CD8-positive, alpha-beta T cell (primary cell): ENCODE measurements at regions of chr7 and their contacts with region 1.

Region 1: GRCh38 chr7:3338161-3338560 is 37.1 kb downstream of the SDK1 start:
- DNase-seq: no peak
- ATAC-seq: no peak
- H3K4me3 ChIP-seq: no peak overlapping the region
- H3K4me3 Mint-ChIP-seq: no peak overlapping the region
- H3K27ac ChIP-seq: no peak overlapping the region
- H3K27ac Mint-ChIP-seq: no peak overlapping the region
- H3K4me1 ChIP-seq: no peaks in the 10 kb centered on the region
- H3K4me1 Mint-ChIP-seq: no peaks in the 10 kb centered on the region
- H3K27me3 ChIP-seq: peaks cover 0 to 3% of the 10 kb centered on the region in 2 experiments
- H3K27me3 Mint-ChIP-seq: peaks cover 30% of the 10 kb centered on the region
- CTCF ChIP-seq: no peak

Region 2: DNA sequence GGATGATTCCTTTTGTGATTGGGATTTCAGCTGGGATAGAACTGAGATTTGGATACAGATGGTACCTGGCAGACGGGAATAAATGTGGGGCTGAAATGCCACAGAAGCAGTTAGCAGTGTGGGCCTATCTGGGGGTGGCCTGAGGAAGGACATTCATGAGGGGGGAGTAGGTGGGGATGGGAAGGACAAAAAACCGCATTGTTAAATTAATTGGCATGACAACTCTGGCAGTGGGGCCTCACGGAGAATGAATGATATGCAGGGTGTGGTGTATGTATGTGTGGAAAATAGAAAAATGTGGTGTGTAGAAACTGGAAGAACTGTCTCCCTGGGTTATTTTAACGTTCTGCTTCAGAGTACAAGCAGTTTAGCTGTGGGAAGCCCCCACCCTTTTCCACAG is 19.3 kb before region 1 on chr7:
- CTCF ChIA-PET with region 1: no interaction called
- POLR2A ChIA-PET with region 1: no interaction called
- intact Hi-C with region 1: loop called in 1 of 2 experiments (anchors 2 kb)
- DNase-seq: no peak
- ATAC-seq: no peak
- H3K4me3 ChIP-seq: no peak overlapping the region
- H3K4me3 Mint-ChIP-seq: no peak overlapping the region
- H3K27ac ChIP-seq: no peak overlapping the region
- H3K27ac Mint-ChIP-seq: no peak overlapping the region
- H3K4me1 ChIP-seq: no peaks in the 10 kb centered on the region
- H3K4me1 Mint-ChIP-seq: no peaks in the 10 kb centered on the region
- H3K27me3 ChIP-seq: no peaks in the 10 kb centered on the region
- H3K27me3 Mint-ChIP-seq: peaks cover 3% of the 10 kb centered on the region
- CTCF ChIP-seq: no peak

Region 3: GRCh38 chr7:4123823-4124222 is 785.7 kb after region 1 on chr7:
- CTCF ChIA-PET with region 1: no interaction called
- POLR2A ChIA-PET with region 1: no interaction called
- intact Hi-C with region 1: no loop called
- DNase-seq: no peak
- ATAC-seq: no peak
- H3K4me3 ChIP-seq: no peak overlapping the region
- H3K4me3 Mint-ChIP-seq: no peak overlapping the region
- H3K27ac ChIP-seq: no peak overlapping the region
- H3K27ac Mint-ChIP-seq: no peak overlapping the region
- H3K4me1 ChIP-seq: no peaks in the 10 kb centered on the region
- H3K4me1 Mint-ChIP-seq: no peaks in the 10 kb centered on the region
- H3K27me3 ChIP-seq: no peaks in the 10 kb centered on the region
- H3K27me3 Mint-ChIP-seq: peaks cover 10% of the 10 kb centered on the region
- CTCF ChIP-seq: no peak